ENCODE measurements at regions of chr1 and their contacts with region 1.

Region 1: DNA sequence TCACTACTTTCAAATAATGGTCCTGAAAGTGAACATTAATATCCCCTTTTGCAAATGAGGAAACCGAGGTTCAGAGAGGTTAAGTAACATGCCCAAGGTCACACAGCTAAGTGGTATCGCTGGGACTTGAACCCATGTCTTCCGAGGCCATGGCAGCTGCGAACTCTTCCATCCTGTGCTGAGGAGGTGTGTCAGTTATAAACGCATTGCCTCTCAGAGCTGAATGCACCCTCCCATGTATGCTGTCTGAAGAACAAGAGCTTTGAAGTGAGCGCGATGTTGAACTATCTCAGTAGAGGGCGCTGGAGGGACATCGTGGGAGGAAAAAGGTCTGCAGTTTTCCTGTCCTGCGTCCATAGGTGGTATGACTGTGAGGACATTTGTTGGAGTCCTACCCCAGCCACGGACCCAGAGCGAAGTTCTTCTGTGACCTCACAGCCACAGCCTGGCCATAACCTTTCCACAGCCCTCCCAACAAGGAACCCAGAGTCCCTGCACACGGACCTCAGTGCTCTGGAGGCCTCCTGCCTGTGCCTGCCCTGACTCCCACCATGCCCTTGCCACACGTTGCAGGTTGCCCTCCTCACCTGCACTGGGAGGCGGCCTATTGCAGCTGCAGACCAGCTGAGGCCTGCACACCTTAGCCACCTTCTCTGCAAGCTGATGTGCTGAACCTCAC is 7.5 kb downstream of the MYOC start:
- DNase-seq: peak in 5 of 6 donors; percentile 59 to 76 (median 62)
- ATAC-seq: peak; percentile 92 to 97 (median 94)
- H3K4me3 ChIP-seq: no peak overlapping the region
- H3K27ac ChIP-seq: no peak overlapping the region
- H3K4me1 ChIP-seq: no peaks in the 10 kb centered on the region
- H3K27me3 ChIP-seq: no peaks in the 10 kb centered on the region
- CTCF ChIP-seq: peak; percentile 24 to 55 (median 48)

Region 2: GRCh38 chr1:171898941-171899340 is 254.0 kb after region 1 on chr1:
- intact Hi-C with region 1: no loop called
- DNase-seq: no peak
- ATAC-seq: no peak
- H3K4me3 ChIP-seq: no peak overlapping the region
- H3K27ac ChIP-seq: no peak overlapping the region
- H3K4me1 ChIP-seq: peaks cover 0 to 3% (median 0%) of the 10 kb centered on the region in 3 donors
- H3K27me3 ChIP-seq: no peaks in the 10 kb centered on the region
- CTCF ChIP-seq: no peak

Region 3: DNA sequence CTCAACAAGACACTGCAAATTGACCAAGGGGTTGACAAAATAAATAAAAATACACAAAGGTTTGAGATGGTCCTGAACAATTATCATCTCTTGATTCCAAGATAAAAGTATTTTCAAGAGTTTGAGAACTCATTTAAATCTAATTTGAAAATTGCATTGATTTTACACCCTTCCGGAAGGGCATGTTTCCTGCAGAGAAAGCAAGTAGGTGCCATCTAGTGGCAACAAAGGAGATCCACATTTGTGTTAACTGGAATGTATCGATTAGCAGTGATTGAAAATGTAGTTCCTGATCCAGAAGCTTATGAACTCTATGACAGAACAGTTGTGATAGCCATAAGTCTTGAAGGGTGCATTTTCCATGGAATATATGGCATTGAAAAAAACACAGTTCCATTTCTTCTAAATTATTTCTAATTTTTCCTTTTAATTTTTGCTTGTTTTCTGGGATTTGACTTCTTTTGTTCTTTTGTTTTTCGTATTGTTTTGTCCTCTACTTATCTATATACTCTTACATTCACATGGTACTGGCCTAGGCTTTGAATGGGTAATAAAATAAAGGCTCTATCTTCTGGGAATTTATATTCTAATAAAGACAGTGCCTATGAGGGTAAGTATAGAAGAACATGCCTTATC is 340.0 kb after region 1 on chr1:
- intact Hi-C with region 1: loop called in 1 of 3 experiments (anchors 10 kb)
- DNase-seq: no peak
- ATAC-seq: peak; percentile 75 to 87 (median 84)
- H3K4me3 ChIP-seq: no peak overlapping the region
- H3K27ac ChIP-seq: no peak overlapping the region
- H3K4me1 ChIP-seq: peaks cover 0 to 3% (median 0%) of the 10 kb centered on the region in 3 donors
- H3K27me3 ChIP-seq: no peaks in the 10 kb centered on the region
- CTCF ChIP-seq: peak; percentile 39 to 76 (median 54)

Measured in pancreas (tissue), 10 donors.